Heart right ventricle (tissue), 16 donors: ENCODE measurements at regions of chr14 and their contacts with region 1.

Region 1: DNA sequence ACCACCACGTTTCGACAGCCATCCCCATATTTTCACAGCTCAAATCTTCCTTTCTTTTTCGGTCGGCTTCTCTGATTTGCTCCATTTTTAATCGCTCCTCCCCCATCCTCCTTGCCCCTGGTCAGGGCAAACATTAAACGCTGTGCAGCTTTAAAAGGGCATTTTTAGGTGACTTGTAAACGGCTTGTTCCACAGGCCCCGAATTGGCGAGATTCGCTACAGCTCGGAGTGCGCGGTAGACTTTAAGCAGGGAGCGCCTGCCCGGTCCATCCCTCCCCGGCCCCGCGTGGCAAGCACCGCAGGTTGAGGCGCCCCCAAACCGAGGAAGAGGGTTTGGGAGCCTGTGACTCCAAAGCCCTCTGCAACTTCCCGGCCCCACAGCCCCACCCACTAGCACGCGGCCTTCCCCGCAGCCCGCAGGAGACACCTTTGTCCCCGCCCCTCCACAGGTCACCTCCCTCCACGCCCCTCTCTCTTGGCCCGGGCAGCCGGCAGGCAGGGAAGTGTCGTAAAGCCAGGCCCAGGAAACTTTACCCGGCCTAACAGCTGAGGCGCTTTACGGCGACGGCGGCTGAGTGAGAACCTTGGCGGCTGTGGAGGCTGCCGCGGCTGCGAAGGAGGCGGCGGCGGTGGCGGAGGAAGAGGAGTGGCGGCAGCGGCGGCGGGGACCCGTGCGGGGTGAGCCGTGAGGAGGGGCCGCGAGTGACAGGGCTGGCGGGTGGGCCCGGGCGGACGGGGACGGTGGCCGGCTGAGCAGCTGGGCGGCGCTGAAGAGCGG is at the start of gene NAA30:
- DNase-seq: peak; percentile 93 to 94
- ATAC-seq: peak; percentile 95 to 98 (median 97)
- H3K4me3 ChIP-seq: peak within 1 kb of the TSS; percentile 80 to 94 (median 90)
- H3K27ac ChIP-seq: peak within 1 kb of the TSS; percentile 38 to 92 (median 88)
- H3K4me1 ChIP-seq: peaks cover 3 to 45% (median 37%) of the 10 kb centered on the region in 9 donors
- H3K27me3 ChIP-seq: no peaks in the 10 kb centered on the region
- CTCF ChIP-seq: peak in 1 of 9 donors; percentile 25
- total RNA-seq, gene NAA30: 23.5 to 30.7 (median 27.1) TPM

Region 2: DNA sequence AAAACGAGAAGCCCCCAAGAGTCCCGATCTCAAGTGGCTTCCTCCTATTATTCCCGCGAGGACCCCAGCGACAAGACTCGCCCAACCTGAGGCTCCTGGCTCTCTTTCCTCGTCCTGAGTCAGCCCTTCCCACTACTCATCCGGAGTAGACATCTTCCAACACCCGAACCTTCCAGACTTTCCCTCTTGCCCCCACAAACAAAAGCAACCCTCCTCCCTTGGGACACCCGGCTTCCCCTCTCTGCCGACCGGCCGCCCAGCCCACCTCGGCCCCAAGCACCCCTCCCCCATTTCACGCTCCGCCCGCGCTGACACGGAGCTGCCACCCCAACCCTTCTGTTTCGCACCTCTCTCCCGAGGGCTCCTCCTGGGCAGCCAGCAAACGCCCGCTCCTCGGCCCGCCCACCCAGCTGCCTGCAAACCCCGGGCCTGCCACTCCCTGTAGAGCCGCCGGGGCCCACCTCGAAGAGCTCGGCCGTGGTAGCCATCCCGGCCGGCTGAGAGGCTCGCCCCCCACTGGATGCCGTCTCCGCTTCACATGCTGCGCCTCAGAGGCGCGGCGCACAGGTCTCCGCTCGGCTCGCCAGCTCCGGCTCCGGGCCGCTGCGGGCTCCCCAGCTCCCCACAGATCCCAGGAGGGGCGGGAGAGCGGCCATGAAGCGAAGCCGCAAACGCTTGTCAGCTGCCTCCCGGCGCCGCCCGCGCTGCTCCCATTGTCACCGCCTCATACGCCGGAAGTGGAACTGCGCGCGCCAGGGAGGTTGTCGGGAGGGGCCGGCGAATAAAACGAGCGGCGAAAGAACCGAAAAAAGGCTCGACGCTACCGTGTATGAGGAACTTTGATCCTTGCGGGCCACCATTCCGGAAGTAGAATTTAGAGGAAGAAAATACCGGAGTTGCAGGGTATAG is 121.8 kb before region 1 on chr14 and contains the starts of genes AP5M1 and EXOC5:
- intact Hi-C with region 1: loop called in 2 of 10 experiments (anchors 10 kb)
- DNase-seq: peak; percentile 91 to 95
- ATAC-seq: peak; percentile 96 to 99 (median 96)
- H3K4me3 ChIP-seq: peak within 1 kb of the TSS; percentile 55 to 97 (median 82)
- H3K27ac ChIP-seq: peak within 1 kb of the TSS; percentile 88 to 99 (median 94)
- H3K4me1 ChIP-seq: peaks cover 2 to 62% (median 50%) of the 10 kb centered on the region in 9 donors
- H3K27me3 ChIP-seq: no peaks in the 10 kb centered on the region
- CTCF ChIP-seq: peak in 3 of 9 donors; percentile 8 to 10 (median 9)
- total RNA-seq, gene AP5M1: 41.1 to 56.8 (median 47.8) TPM
- total RNA-seq, gene EXOC5: 54.7 to 70.1 (median 61.4) TPM

Region 3: GRCh38 chr14:57275023-57275664 is 115.1 kb before region 1 on chr14:
- intact Hi-C with region 1: loop called in 1 of 10 experiments (anchors 10 kb)
- DNase-seq: no peak
- ATAC-seq: no peak
- H3K4me3 ChIP-seq: no peak overlapping the region
- H3K27ac ChIP-seq: no peak overlapping the region
- H3K4me1 ChIP-seq: peaks cover 0 to 26% (median 17%) of the 10 kb centered on the region in 9 donors
- H3K27me3 ChIP-seq: no peaks in the 10 kb centered on the region
- CTCF ChIP-seq: no peak

Region 4: DNA sequence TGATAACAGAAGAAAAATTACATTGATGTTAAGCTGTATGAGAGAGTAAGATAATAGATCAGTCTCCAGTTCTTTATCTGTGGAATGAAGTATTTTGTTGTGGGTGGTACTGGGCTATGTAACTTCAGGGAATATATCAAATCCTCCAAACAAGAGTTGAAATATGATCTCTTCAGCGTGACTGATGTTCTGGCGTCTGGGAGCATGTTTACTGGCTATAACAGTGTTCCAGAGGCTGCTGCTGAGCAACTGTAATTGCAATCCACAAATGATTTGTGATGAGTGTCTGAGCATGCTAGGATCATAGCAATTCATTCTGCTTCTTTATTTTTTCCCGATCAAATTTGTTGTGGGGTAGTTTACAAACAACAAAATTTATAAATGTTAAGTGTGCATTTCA is 122.0 kb after region 1 on chr14:
- intact Hi-C with region 1: no loop called
- DNase-seq: no peak
- ATAC-seq: no peak
- H3K4me3 ChIP-seq: no peak overlapping the region
- H3K27ac ChIP-seq: no peak overlapping the region
- H3K4me1 ChIP-seq: no peaks in the 10 kb centered on the region
- H3K27me3 ChIP-seq: no peaks in the 10 kb centered on the region
- CTCF ChIP-seq: no peak

Region 5: DNA sequence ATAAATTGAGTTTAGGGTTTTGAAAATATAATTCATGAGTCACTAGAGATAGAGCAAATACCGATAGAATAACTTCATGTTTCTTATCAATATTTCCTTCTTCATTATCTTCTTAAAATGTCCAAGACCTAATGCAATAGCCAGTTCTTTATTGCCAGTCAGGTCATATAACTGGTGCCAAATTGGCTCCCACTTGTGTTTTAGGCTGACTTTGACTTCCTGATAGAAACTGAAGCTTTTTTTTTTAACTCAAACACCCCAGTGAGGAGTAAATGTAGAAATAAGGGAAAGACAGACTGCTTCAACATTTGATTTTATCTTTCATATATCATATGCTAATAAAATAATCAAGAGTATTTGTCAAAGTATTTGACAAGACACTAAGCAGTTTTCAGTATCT is 681.1 kb after region 1 on chr14:
- intact Hi-C with region 1: no loop called
- DNase-seq: no peak
- ATAC-seq: no peak
- H3K4me3 ChIP-seq: no peak overlapping the region
- H3K27ac ChIP-seq: no peak overlapping the region
- H3K4me1 ChIP-seq: peaks cover 0 to 13% (median 7%) of the 10 kb centered on the region in 9 donors
- H3K27me3 ChIP-seq: no peaks in the 10 kb centered on the region
- CTCF ChIP-seq: no peak